ENCODE measurements at regions of chr20 and their contacts with region 1.

Region 1: GRCh38 chr20:4326195-4327065 is 311.1 kb upstream of the RNF24 start:
- DNase-seq: peak in 2 of 3 donors; percentile 27 to 63
- H3K4me3 ChIP-seq: no peak overlapping the region
- H3K4me3 Mint-ChIP-seq: no peak overlapping the region
- H3K27ac ChIP-seq: no peak overlapping the region
- H3K27ac Mint-ChIP-seq: peak overlapping the region in 1 of 7 donors; percentile 37
- H3K4me1 ChIP-seq: peaks cover 31 to 38% of the 10 kb centered on the region in 2 donors
- H3K4me1 Mint-ChIP-seq: peaks cover 37% of the 10 kb centered on the region
- H3K27me3 ChIP-seq: no peaks in the 10 kb centered on the region
- H3K27me3 Mint-ChIP-seq: peaks cover 1 to 4% (median 3%) of the 10 kb centered on the region in 3 donors
- CTCF ChIP-seq: no peak

Region 2: DNA sequence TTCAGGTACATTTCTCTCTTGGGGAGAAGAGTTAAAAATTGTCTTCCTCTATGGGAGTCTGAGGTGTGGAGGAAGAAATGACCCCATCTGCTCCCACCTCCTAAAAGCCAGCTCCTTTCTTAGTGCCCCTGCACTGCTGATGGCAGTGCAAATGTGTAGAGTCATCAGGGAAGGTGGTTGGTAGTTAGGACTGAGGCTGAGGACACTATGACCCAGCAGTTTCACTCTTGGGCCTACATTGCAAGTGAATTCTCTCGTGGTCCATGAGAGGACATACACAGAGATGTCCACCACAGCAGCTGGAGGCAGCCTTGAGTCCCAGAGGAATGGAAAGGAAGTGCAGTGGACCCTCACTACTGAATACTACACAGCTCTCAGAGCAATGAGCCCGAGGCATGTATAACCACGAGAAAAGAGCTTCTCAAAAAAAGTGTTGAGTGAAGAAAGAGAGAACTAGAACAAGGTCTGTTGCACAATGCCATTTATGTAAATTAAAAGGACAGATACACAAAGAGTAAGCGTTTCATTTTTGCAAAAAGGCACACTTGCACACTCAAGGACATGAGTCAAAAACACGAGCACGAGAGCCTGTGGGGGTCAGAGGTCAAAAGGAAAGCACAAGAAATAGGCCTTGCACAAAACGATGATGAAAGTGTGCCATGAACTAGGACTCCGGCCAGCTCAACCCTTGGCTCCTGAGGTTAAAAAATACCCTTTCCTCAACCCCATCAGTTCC is 87.1 kb after region 1 on chr20:
- intact Hi-C with region 1: loop called in 1 of 2 experiments (anchors 10 kb)
- DNase-seq: peak; percentile 85 to 96 (median 95)
- H3K4me3 ChIP-seq: peak overlapping the region in 2 of 3 experiments; percentile 33 to 63
- H3K4me3 Mint-ChIP-seq: peak overlapping the region; percentile 65 to 89
- H3K27ac ChIP-seq: peak overlapping the region; percentile 64 to 86
- H3K27ac Mint-ChIP-seq: peak overlapping the region; percentile 90 to 98 (median 97)
- H3K4me1 ChIP-seq: peaks cover 35 to 46% of the 10 kb centered on the region in 2 donors
- H3K4me1 Mint-ChIP-seq: peaks cover 40% of the 10 kb centered on the region
- H3K27me3 ChIP-seq: no peaks in the 10 kb centered on the region
- H3K27me3 Mint-ChIP-seq: peaks cover 0 to 4% (median 1%) of the 10 kb centered on the region in 3 donors
- CTCF ChIP-seq: no peak